Activated naive CD4-positive, alpha-beta T cell treated with anti-CD3 and anti-CD28 coated beads for 36 hours (primary cell): ENCODE measurements at regions of chr9 and their contacts with region 1.

Region 1: DNA sequence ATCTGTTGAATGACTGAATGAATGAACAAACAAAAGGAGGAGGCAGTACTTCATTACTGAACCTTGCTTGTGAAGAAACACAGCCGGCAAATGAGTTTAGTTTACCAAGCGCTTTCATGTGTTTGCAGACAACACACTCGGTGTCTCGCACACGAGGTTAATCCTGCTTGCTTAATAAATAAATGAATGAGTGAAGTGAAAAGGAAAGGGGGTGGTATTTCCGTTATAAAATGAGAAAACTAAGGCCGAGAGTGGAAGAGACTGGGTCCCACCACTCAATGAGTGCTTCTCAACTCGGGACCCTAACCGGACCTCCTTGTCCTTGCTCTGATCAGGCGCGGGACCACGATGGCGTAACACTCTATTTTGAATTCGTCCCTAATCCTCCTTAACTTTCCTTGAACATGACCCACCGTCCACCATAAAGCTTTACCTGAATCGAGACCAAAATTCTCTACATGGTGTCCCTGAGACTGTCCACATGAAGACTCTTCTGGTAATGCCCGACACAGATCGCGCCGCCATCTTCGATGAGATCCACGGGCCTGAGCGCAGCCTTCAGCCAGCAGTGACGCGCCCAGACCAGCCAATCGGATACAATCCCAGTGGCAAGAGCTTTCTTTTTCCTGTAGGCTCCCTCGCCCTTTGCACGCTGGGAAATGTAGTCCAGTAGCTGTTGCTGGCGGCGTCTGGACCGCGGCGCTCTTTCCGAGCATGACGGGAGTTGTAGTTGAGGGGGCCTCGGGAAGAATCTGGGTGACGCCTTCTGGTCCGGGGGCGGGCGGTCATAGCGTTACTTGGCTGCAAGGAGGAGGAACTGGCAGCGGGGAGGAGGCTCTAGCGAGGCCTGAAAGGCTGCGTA is at the starts of genes MRPL50 and ZNF189:
- DNase-seq: peak; percentile 99
- H3K4me3 Mint-ChIP-seq: peak within 1 kb of the TSS; percentile 92
- H3K27ac Mint-ChIP-seq: peak within 1 kb of the TSS; percentile 97
- H3K4me1 Mint-ChIP-seq: peaks cover 66% of the 10 kb centered on the region
- H3K27me3 Mint-ChIP-seq: no peaks in the 10 kb centered on the region
- total RNA-seq, gene MRPL50: 13.2 to 14.3 TPM
- total RNA-seq, gene ZNF189: 5.5 to 5.7 TPM

Region 2: GRCh38 chr9:99906403-99907207 is 1491.7 kb before region 1 on chr9 and contains the start of gene STX17:
- CTCF ChIA-PET with region 1: no interaction called
- intact Hi-C with region 1: loop called (anchors 2 kb)
- DNase-seq: peak; percentile 75
- H3K4me3 Mint-ChIP-seq: peak within 1 kb of the TSS; percentile 95
- H3K27ac Mint-ChIP-seq: peak within 1 kb of the TSS; percentile 95
- H3K4me1 Mint-ChIP-seq: peaks cover 22% of the 10 kb centered on the region
- H3K27me3 Mint-ChIP-seq: no peaks in the 10 kb centered on the region
- total RNA-seq, gene STX17: 28.1 to 31.6 TPM

Region 3: DNA sequence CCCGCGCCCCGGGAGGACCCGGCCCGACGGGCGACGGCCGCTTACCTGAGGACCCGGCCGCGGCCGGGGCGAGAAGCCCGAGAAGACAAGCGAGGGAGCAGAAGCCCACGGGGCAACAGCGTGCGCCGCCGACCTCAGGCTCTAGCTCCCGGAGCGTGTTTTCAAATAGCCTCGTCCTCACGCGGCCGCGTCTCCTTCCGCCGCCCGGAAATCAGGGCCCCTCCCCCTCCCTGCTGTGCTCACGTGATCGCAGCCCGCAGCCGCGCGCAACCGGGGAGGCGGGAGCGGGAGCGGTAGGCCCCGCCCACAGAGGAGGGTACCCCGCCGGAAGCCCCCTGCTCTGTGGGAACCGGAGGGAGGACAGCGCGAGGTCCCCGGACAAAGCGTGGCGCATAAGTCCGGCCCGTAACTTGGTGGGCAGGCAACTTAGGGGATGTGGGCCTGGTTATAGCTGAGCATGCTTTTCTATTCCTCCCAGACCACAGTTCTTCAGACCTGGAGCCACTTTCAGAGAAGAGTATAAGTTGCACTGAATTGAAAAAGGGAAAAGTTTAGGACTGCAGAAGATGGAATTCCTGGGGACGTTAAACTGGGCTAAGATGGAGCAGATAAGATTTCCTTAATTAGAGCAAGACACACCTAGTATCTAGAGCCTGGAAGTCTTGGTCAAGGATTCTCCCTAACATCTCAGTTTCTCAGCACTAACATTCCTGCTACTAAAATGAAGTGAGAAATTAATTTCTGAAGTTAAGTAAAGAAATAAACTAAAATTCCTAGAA is 1045.4 kb before region 1 on chr9 and contains the start of gene TEX10:
- CTCF ChIA-PET with region 1: no interaction called
- intact Hi-C with region 1: loop called (anchors 2 kb)
- DNase-seq: peak; percentile 91
- H3K4me3 Mint-ChIP-seq: peak within 1 kb of the TSS; percentile 85
- H3K27ac Mint-ChIP-seq: peak within 1 kb of the TSS; percentile 74
- H3K4me1 Mint-ChIP-seq: peaks cover 33% of the 10 kb centered on the region
- H3K27me3 Mint-ChIP-seq: no peaks in the 10 kb centered on the region
- total RNA-seq, gene TEX10: 17.3 to 17.9 TPM

Region 4: DNA sequence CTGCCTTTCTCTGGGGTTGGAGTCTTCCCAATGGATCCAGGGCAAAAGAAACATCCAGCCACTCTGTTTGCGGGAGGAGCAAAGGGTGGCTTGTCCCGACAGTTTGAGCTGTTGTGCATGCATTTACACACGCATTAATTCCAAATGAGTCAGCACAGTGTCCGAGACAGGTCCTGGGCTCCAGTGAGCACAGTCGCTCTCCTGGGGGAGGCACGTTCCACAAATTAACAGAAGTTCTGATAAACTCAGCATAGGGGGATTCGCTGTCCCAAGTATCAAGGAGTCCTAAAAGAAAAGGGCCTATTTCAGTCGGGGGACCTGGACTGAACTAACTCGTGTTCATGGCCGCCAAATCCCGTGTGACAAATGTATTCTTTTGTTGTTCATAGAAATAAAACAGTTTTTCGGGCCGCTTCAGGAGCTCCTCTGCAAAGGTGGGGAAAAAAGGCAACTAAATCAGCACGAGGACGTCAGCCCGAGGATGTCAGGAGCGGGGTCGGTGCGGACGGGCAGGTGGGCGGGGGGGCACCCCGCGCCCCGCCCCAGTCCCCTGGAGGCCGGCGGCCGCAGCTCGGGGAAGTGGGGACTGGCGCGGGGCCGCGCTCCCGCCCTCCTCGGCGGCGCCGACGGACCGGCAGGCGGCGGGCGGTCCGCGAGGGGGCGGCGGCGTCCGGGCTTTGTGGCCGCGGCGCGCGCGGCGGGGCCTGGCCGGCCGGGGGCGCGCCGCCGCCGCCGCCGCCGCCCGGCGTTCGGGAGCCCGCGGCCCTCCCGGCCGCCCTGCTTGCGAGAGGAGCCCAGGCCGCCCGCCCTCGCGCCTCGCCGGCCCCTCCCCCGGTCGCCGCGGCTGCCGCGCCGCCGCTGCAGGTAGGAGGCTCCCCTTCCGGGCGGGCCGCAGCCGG is 971.5 kb before region 1 on chr9 and contains the start of gene MSANTD3:
- CTCF ChIA-PET with region 1: no interaction called
- intact Hi-C with region 1: loop called (anchors 5 kb)
- DNase-seq: peak; percentile 52
- H3K4me3 Mint-ChIP-seq: peak within 1 kb of the TSS; percentile 91
- H3K27ac Mint-ChIP-seq: peak within 1 kb of the TSS; percentile 82
- H3K4me1 Mint-ChIP-seq: peaks cover 30% of the 10 kb centered on the region
- H3K27me3 Mint-ChIP-seq: no peaks in the 10 kb centered on the region
- total RNA-seq, gene MSANTD3: 10.4 to 11.5 TPM

Region 5: DNA sequence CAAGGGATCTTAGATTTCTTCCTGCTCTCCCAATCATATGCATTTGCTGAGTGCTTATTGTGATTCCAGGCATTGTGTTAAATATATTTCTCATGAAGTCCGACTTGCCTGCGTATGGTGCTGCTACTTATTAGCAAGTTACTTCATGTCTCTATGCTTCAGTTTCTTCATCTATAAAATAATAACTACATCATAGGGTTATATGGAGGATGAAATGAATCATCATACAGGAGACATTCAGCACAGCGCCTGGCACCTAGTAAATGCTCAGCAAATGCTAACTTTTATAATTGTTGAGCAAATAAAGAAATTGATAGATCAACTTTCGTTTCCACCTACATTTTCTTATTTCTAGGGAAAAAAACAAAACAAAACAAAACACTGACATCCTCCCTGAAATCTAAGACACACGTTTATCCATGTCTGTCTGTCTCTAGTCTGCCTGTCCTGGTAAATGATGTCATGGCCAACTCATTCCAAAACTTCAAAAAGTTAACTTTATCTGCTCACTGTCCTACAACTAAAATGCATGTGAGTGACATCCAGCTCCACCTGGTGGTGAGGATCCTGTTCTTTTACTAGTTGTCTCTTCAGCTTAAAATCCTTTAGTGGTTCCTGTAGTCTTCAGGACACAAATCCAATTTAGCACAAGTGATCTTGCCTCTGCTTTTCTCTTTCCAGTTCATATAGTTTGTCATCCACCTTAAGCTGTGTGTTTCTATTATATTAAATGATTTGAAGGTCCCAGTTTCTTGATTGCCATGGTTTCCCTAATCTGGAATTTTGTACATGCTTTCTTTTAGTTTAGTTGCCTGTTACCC is 168.8 kb after region 1 on chr9:
- CTCF ChIA-PET with region 1: interaction called, 3 read pairs
- intact Hi-C with region 1: loop called (anchors 2 kb)
- DNase-seq: peak; percentile 80
- H3K4me3 Mint-ChIP-seq: no peak overlapping the region
- H3K27ac Mint-ChIP-seq: peak overlapping the region; percentile 59
- H3K4me1 Mint-ChIP-seq: peaks cover 53% of the 10 kb centered on the region
- H3K27me3 Mint-ChIP-seq: no peaks in the 10 kb centered on the region